BJ (cell line): ENCODE measurements at regions of chr17 and their contacts with region 1.

Region 1: DNA sequence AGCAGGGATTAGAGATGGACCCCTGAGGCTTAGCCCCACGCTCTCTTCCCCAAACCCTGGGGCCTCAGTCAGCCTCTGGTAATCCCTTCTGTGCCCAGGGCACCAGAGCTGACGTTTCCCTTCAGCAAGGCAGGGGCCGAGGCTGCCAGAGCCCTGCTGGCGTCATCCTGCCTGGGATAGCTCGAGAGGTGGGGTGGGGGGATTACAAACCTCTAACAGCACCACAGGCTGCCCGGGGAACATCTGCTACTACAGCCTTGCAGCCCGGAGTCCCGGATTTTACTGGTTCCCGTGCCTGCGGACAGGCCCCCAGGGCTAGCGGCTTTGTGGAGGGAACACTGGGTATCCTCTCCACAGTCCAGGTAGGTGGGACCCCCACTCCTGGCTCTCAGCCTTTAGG is at the start of gene AANAT:
- DNase-seq: no peak
- H3K4me3 ChIP-seq: no peak within 1 kb of the TSS
- H3K27me3 ChIP-seq: 0 out of 2 replicates have a peak, but pooled peaks cover 2% of the 10 kb centered on the region
- CTCF ChIP-seq: no peak
- polyA plus RNA-seq, gene AANAT: not detected in 2 replicates

Region 2: DNA sequence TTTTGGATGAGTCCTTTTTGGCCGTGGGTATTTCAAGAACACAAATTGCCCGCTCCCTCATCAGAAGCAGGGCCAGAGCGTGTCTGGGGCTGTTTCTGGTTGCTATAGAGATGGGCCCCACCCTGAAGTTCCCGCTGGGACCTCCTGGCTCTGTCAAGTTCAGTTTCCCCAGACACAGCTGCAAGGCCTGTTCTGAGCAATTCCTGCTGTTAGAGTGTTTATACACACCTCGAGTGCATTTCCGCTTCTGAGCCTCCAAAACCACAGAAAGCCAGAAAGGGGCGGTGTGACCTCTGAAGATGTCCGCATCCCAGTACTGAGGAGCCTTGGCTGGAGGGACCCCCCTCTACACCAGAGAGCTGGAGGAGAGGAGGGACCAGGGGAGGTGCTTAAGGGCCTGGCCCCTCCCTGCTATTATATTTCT is 602.9 kb before region 1 on chr17:
- CTCF ChIA-PET with region 1: no interaction called
- POLR2A ChIA-PET with region 1: no interaction called
- DNase-seq: peak; percentile 63
- H3K4me3 ChIP-seq: no peak overlapping the region
- H3K27me3 ChIP-seq: no peaks in the 10 kb centered on the region
- CTCF ChIP-seq: no peak

Region 3: DNA sequence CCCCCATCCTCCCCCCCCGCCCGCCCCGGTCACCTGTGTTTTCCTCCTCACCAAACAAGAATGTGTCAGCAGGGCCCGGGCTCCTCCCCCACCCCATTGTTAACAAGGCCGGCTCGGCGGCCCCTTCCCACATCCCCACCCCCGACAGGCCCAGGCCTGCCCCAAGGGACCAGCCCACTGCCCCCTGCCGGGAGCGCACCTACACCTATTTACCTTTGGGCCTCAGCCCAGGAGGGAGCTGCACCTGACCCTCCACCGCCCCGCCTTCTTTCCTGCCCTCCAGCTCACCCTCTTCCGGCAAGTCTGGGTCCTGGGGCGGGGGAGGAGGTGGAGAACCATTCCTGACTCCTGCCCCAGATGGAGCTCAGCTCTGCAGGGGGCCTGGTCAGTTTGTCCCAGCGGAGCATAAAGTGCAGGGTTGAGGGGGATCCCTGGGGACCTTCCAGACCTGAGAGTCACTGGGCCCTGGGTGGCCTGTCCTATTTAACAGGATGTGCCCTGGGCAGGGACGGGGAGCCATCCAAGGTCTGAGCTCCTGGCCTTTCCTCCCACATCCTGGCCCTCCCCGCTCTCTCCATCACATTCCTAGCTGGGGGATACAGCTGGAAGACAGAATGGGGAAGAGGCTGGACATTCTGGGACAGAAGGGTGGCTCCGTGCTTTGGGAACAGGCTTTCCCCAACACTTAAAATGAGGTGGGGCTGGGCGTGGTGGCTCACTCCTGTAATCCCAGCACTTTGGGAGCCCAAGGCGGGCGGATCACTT is 334.6 kb before region 1 on chr17:
- CTCF ChIA-PET with region 1: no interaction called
- POLR2A ChIA-PET with region 1: no interaction called
- DNase-seq: no peak
- H3K4me3 ChIP-seq: no peak overlapping the region
- H3K27me3 ChIP-seq: peaks cover 9% of the 10 kb centered on the region
- CTCF ChIP-seq: no peak

Region 4: GRCh38 chr17:76479515-76480060 is 12.2 kb after region 1 on chr17:
- CTCF ChIA-PET with region 1: interaction called, 21 read pairs
- POLR2A ChIA-PET with region 1: no interaction called
- DNase-seq: no peak
- H3K4me3 ChIP-seq: no peak overlapping the region
- H3K27me3 ChIP-seq: no peaks in the 10 kb centered on the region
- CTCF ChIP-seq: no peak